ENCODE measurements at regions of chr17 and their contacts with region 1.

Region 1: DNA sequence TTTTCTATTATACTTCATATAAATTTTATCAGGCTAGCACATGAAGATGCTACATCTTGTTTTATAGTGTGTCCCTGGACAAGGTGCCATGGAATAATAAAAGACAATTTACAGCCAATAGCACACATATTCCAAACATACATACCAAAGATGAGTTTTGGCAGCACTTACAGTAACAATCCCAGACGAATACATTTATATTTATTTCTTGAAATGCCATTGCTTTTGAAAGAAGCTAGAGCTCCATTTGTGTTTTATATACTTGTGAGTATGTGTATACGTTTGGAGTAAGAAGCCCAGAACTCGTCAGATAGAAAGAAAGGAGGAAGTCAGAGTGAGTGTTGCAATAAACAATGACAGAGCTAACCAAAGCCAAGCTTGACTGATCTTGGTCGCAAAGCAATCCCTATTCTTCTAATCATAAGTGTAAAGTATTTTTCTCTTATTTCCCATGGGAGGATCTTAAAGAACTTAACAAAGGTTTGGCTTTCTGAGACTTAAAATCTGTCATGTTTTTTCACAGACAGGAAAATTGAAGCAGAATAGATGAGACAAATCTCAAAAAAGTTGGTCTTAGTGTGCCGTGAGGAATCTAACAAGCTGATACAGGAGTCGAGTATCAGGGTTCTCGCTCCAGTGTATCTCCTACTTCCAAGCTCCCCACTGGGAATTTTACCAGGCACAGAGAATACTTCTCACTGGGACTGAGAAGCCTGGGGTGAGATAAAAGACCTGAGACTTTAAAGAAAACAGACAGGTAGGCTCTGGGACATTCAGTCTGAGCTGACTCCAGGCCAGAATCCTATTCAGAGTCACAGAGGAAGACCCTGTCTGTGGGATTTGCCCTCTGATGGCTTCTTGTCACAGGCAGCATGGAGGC is 175.4 kb downstream of the AATF start:
- DNase-seq: no peak
- ATAC-seq: no peak
- H3K4me3 ChIP-seq: no peak overlapping the region
- H3K27ac ChIP-seq: no peak overlapping the region
- H3K4me1 ChIP-seq: peaks cover 4% of the 10 kb centered on the region; the same call in 1 of the 2 replicates
- H3K27me3 ChIP-seq: no peaks in the 10 kb centered on the region
- CTCF ChIP-seq: no peak

Region 2: DNA sequence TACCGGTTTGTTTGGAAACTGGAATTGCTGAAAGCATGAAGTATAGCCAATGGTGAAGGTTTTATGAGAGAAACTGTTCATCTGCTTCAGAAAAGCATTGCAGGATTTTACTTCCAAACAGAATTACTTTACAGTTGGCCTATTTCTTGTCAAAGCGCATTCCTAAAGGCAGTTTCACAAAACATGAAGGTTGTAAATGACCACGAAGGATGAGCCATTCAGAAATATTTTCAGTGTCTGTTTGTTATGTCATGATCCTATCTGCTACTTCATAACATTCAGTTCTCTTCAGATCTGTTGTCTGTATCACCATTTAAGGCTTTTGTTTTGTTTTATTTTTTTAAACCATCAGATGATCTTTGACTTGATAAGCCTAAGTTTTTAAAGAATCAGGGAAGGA is 129.7 kb before region 1 on chr17:
- CTCF ChIA-PET with region 1: no interaction called
- POLR2A ChIA-PET with region 1: no interaction called
- intact Hi-C with region 1: no loop called
- DNase-seq: no peak
- ATAC-seq: no peak
- H3K4me3 ChIP-seq: no peak overlapping the region
- H3K27ac ChIP-seq: no peak overlapping the region
- H3K4me1 ChIP-seq: no peaks in the 10 kb centered on the region
- H3K27me3 ChIP-seq: 0 out of 2 replicates have a peak, but pooled peaks cover 5% of the 10 kb centered on the region
- CTCF ChIP-seq: no peak

Region 3: DNA sequence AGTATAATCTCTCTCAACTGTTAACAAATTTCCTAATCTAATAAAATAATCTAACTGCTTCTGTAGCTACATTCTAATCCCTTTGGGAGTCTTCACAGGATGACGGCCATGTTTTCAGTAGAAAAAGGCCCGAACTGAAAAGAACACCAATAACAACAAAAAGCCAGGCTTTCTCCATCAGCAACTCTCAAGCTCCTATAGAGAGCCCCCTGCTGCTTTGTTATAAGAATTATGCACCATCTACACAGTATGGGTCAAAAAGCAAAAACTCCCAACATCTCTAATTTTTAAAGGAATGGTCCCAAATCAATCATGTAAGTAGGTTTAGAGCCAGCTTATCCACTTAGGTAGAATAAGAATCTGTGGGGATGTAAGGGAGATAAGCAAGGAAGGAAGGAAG is 88.0 kb after region 1 on chr17:
- CTCF ChIA-PET with region 1: no interaction called
- POLR2A ChIA-PET with region 1: no interaction called
- intact Hi-C with region 1: loop called (anchors 10 kb)
- DNase-seq: no peak
- ATAC-seq: no peak
- H3K4me3 ChIP-seq: no peak overlapping the region
- H3K27ac ChIP-seq: no peak overlapping the region
- H3K4me1 ChIP-seq: no peaks in the 10 kb centered on the region
- H3K27me3 ChIP-seq: no peaks in the 10 kb centered on the region
- CTCF ChIP-seq: peak; percentile 33; the same call in 1 of the 2 replicates

Measured in PC-3 (cell line).